HCT116 (cell line): ENCODE measurements at regions of chr5 and their contacts with region 1.

Region 1: DNA sequence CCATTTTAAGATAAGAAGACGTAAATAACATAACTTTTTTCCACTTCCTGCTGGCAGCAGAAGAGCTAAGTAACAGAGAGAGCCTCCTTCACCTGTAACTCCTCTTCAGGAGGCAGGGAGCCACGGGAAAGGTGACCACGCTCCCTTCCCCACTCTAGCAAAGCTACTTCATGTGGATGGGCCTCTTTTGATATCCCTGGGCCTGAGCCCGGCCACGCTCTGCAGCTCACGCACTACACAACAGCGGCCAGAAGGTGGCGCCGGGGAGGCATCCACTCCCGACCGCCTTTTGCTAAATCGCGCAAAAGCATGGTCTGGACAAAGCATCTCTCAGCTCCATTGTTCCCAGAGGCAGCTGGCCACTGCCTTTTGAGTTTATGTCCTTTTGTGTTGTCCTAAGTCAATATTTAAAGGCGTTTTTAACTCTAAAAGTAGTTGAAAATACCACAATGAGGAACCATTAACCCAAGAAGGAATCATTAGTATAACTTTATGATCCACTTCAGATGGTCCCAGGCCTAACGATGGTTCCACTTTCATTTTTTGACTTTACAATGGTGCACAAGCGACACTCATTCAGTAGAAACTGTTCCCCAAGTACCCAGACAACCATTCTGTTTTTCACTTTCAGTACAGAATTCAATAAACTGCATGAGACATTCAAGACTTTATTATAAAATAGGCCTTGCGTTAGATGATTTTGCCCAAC is 23.6 kb downstream of the CMBL start:
- DNase-seq: peak; percentile 42
- ATAC-seq: peak; percentile 98
- H3K4me3 ChIP-seq: no peak overlapping the region
- H3K27ac ChIP-seq: no peak overlapping the region
- H3K4me1 ChIP-seq: 0 out of 4 replicates have a peak, but pooled peaks cover 2 to 4% of the 10 kb centered on the region in 2 experiments
- H3K27me3 ChIP-seq: no peaks in the 10 kb centered on the region
- CTCF ChIP-seq: peak; percentile 78 to 97 (median 97)
- POLR2A ChIP-seq: no peak
- RAD21 ChIP-seq: peak; percentile 91

Region 2: DNA sequence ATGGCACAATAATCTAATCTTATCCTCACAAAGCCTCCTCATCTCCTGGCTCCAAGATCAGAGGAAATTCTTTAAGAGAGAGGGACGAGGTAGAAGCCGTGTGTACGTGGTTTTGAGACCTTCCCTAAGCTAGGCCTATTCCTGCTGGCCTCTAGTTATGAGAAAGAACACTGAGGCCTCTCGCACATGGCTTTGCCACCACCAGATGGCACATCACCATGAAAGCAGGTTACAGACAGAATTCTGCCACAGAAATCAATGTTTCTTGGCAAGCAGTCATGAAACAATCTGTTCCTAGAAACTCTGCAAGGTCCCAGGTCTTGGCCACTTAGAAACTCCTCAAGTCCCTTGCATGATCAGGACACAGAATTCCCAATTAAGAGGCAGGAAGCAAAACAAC is 385.8 kb before region 1 on chr5:
- CTCF ChIA-PET with region 1: no interaction called
- POLR2A ChIA-PET with region 1: no interaction called
- RAD21 ChIA-PET with region 1: no interaction called
- intact Hi-C with region 1: no loop called
- DNase-seq: peak; percentile 8
- ATAC-seq: peak; percentile 77
- H3K4me3 ChIP-seq: no peak overlapping the region
- H3K27ac ChIP-seq: no peak overlapping the region
- H3K4me1 ChIP-seq: no peaks in the 10 kb centered on the region
- H3K27me3 ChIP-seq: no peaks in the 10 kb centered on the region
- CTCF ChIP-seq: peak; percentile 30 to 58 (median 47); a peak in 5 of 6 replicates
- POLR2A ChIP-seq: no peak
- RAD21 ChIP-seq: peak; percentile 32; the same call in 1 of the 2 replicates

Region 3: GRCh38 chr5:10364186-10364683 is 80.2 kb after region 1 on chr5:
- CTCF ChIA-PET with region 1: interaction called, 41 read pairs
- POLR2A ChIA-PET with region 1: no interaction called
- RAD21 ChIA-PET with region 1: interaction called, 3 to 4 read pairs
- intact Hi-C with region 1: loop called (anchors 1 kb)
- DNase-seq: no peak
- ATAC-seq: peak; percentile 66
- H3K4me3 ChIP-seq: no peak overlapping the region
- H3K27ac ChIP-seq: no peak overlapping the region
- H3K4me1 ChIP-seq: peaks cover 8 to 25% of the 10 kb centered on the region in 2 experiments
- H3K27me3 ChIP-seq: no peaks in the 10 kb centered on the region
- CTCF ChIP-seq: peak; percentile 18 to 68 (median 49); a peak in 4 of 6 replicates
- POLR2A ChIP-seq: no peak
- RAD21 ChIP-seq: peak; percentile 58

Region 4: GRCh38 chr5:10424124-10424731 is 140.1 kb after region 1 on chr5:
- CTCF ChIA-PET with region 1: interaction called, 8 read pairs
- POLR2A ChIA-PET with region 1: no interaction called
- RAD21 ChIA-PET with region 1: no interaction called
- intact Hi-C with region 1: loop called (anchors 1 kb)
- DNase-seq: peak; percentile 8
- ATAC-seq: peak; percentile 87
- H3K4me3 ChIP-seq: no peak overlapping the region
- H3K27ac ChIP-seq: no peak overlapping the region
- H3K4me1 ChIP-seq: no peaks in the 10 kb centered on the region
- H3K27me3 ChIP-seq: no peaks in the 10 kb centered on the region
- CTCF ChIP-seq: peak; percentile 26 to 64 (median 60); a peak in 4 of 6 replicates
- POLR2A ChIP-seq: no peak
- RAD21 ChIP-seq: peak; percentile 54

Region 5: DNA sequence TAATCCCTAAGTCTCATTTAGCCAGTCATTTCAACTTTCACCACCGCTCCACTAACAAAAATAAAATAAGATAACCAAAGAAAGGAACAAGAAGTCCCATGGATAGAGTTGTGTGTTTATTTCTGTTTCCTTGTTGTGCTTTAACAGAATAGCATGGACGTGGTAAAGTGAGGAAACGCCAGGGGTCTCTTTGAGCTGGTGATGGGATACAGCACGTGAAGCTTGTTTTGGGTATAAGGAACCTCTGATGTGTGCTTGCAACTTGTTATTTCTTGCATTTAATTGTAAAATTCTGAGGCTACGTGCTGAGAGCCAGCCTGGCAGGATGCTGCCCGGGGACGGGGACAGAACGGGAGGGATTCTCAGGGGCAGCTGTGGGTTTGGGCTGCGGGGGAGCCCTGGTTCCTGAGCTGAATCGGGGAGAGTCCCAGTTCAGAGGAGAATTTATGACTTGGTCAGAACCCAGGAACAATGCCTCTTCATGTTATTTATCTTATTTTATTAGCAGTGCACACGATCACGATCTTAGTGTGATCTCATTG is 343.1 kb after region 1 on chr5:
- CTCF ChIA-PET with region 1: interaction called, 4 read pairs
- POLR2A ChIA-PET with region 1: no interaction called
- RAD21 ChIA-PET with region 1: no interaction called
- intact Hi-C with region 1: loop called (anchors 1 kb)
- DNase-seq: no peak
- ATAC-seq: peak; percentile 5
- H3K4me3 ChIP-seq: peak overlapping the region; percentile 27 to 43
- H3K27ac ChIP-seq: 0 out of 2 replicates have a peak overlapping the region, but pooled peaks have one; percentile 32
- H3K4me1 ChIP-seq: peaks cover 17 to 52% of the 10 kb centered on the region in 2 experiments
- H3K27me3 ChIP-seq: no peaks in the 10 kb centered on the region
- CTCF ChIP-seq: no peak
- POLR2A ChIP-seq: no peak
- RAD21 ChIP-seq: no peak

Region 6: DNA sequence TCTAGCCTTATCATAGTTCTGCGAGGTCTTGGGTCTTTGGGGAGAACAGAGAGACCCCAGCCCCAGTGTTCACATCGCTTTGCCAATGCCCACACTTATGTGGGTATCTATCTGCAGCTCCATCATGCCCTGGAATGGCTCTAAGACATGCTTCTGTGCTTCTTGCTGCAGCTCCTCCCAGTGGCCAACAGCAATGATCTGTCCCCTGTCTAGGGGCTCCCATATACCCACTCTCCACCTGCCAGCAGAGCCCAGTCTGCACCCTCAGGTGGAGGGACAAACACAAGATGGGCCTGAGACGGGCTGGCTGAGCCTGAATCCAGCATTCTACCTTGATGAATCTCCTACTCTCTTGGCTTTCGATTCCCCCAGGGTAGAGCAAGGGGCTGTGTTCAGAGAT is 491.6 kb after region 1 on chr5:
- CTCF ChIA-PET with region 1: no interaction called
- POLR2A ChIA-PET with region 1: no interaction called
- RAD21 ChIA-PET with region 1: no interaction called
- intact Hi-C with region 1: no loop called
- DNase-seq: no peak
- ATAC-seq: peak; percentile 71
- H3K4me3 ChIP-seq: no peak overlapping the region
- H3K27ac ChIP-seq: no peak overlapping the region
- H3K4me1 ChIP-seq: no peaks in the 10 kb centered on the region; a peak in 1 of 4 replicates
- H3K27me3 ChIP-seq: no peaks in the 10 kb centered on the region
- CTCF ChIP-seq: peak; percentile 21 to 34 (median 27); a peak in 4 of 6 replicates
- POLR2A ChIP-seq: no peak
- RAD21 ChIP-seq: peak; percentile 34